Panc1 (cell line): ENCODE measurements at regions of chr10 and their contacts with region 1.

Region 1: DNA sequence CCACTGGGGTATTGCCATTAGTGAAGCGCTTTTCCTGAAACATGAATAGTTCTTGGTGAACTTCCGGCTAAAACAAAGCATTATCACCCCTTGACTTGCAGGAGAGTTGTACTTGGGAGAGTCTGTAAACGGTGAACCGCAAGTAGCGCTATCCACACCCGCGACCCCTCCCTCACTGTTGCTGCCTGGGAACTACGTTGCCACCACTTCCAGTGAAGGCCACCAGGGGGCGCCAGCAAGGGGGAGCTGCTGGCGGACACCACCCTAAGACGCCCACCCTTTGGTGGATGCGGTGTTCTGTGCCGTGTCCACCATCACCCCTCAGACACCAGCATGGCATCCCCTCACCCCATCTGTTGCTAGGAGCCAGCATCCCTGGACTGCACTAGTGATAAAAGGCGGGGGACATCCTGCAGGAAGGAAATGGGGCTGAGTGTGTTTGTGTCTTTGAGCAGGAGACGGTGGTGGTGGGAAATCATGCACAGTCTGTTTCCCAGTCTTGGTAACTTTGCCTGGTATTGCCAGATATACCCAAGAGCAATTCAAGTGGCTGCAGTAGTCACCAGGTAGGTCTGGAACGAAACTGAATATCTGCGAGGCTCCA is 298.2 kb downstream of the FRMD4A start:
- DNase-seq: no peak
- ATAC-seq: no peak
- H3K4me3 ChIP-seq: no peak overlapping the region
- H3K27ac ChIP-seq: no peak overlapping the region
- H3K4me1 ChIP-seq: no peaks in the 10 kb centered on the region
- H3K27me3 ChIP-seq: no peaks in the 10 kb centered on the region
- CTCF ChIP-seq: peak; percentile 73

Region 2: DNA sequence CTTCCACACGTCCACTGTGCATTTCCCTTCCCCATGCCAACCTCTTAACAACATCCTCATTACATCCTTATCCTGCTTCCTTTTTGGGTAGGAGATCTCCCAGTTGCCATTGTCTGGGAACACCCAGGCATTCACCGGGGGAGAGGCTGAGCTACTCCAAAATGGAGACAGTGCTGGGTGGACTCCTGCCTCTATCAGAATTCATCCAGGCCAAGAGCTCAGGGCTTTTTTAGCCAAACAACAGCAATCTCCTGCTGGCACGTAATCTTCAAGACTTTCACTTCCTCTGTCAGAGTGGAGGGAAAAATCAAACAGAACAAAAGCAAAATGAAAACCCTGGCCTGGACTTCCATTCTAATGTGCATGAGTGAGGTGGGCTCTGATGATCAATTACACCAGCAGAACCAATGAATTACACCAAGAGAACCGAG is 200.8 kb before region 1 on chr10:
- CTCF ChIA-PET with region 1: no interaction called
- POLR2A ChIA-PET with region 1: no interaction called
- in situ Hi-C with region 1: no loop called
- intact Hi-C with region 1: no loop called
- DNase-seq: no peak
- ATAC-seq: no peak
- H3K4me3 ChIP-seq: no peak overlapping the region
- H3K27ac ChIP-seq: no peak overlapping the region
- H3K4me1 ChIP-seq: no peaks in the 10 kb centered on the region
- H3K27me3 ChIP-seq: no peaks in the 10 kb centered on the region
- CTCF ChIP-seq: no peak

Region 3: DNA sequence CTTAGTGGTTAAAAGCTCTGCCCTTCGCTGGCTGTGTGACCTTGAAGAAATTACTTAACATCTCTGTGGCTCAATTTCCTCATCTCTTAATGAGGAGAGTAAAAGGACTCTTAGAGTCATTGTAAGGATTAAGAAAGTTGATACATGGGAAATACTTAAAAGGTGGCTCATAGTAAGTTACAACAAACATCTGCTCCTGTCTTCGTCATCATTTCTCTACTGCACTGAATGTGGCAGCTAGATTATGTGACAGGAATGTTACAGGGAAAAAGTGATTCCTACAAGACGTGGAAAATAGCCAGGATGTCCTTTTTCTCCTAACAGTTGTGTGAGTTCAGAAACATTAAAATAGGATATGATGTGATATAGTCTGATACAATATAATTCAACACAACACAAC is 113.5 kb after region 1 on chr10:
- CTCF ChIA-PET with region 1: no interaction called
- POLR2A ChIA-PET with region 1: no interaction called
- in situ Hi-C with region 1: no loop called
- intact Hi-C with region 1: no loop called
- DNase-seq: no peak
- ATAC-seq: no peak
- H3K4me3 ChIP-seq: no peak overlapping the region
- H3K27ac ChIP-seq: no peak overlapping the region
- H3K4me1 ChIP-seq: no peaks in the 10 kb centered on the region
- H3K27me3 ChIP-seq: no peaks in the 10 kb centered on the region
- CTCF ChIP-seq: no peak

Region 4: DNA sequence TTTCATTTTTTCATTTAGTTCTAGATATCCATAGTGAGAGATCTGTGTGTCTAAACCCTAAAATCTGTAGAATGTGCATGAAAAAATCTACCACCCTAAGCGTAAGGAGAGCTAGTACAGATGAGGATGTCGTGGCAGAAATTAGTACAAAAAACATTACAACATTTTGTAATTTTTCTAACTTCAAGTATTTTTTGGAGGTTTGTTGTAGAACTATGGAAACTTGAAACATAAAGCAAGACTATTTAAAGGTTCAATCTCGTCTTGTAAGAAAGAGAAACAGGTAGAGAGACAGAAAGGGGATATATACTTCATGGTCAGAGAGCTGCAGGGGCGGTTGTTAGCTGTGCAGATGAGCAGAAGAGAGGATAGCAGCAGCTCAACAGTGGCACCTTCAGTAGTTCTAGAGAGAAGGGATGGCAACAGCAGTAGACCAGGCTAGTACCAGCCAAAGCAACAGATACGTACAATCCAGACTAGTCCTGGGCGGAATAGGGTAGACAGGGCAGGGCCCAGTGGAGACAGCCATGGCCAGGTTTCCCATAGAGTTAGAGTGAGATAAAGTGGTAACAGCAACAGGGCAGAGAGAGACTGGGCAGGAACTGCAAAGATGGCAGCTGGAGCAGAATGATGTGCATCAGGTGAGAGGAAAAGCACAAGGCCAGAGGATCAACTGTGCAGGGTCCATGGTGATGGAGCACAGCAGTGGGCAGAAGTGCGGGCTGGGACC is 153.0 kb after region 1 on chr10:
- CTCF ChIA-PET with region 1: no interaction called
- POLR2A ChIA-PET with region 1: interaction called, 14 read pairs
- in situ Hi-C with region 1: no loop called
- intact Hi-C with region 1: no loop called
- DNase-seq: peak; percentile 22
- ATAC-seq: peak; percentile 98
- H3K4me3 ChIP-seq: no peak overlapping the region
- H3K27ac ChIP-seq: no peak overlapping the region
- H3K4me1 ChIP-seq: no peaks in the 10 kb centered on the region
- H3K27me3 ChIP-seq: no peaks in the 10 kb centered on the region
- CTCF ChIP-seq: no peak

Region 5: DNA sequence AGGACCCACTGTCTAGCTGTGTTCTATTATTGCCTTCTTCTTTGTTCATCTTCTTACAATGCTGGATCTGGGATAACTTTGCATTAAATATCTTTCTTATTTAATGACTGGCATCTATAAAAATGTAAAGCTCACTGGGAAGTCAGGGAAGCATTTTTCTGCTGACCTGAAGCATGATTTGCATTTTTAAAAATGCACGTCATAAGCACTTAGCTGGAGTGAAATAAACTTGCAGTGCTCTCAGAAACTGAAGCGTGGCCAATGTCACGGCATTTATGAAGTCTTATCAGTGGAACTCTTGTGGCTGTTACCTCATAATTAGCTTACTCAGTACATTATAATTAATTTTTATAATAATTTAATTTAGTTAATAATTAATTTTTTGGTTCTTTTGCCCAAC is 239.1 kb after region 1 on chr10:
- CTCF ChIA-PET with region 1: no interaction called
- POLR2A ChIA-PET with region 1: no interaction called
- in situ Hi-C with region 1: no loop called
- intact Hi-C with region 1: no loop called
- DNase-seq: no peak
- ATAC-seq: no peak
- H3K4me3 ChIP-seq: no peak overlapping the region
- H3K27ac ChIP-seq: no peak overlapping the region
- H3K4me1 ChIP-seq: no peaks in the 10 kb centered on the region
- H3K27me3 ChIP-seq: no peaks in the 10 kb centered on the region; the same call in 1 of the 2 replicates
- CTCF ChIP-seq: no peak